ENCODE measurements at regions of chr6 and their contacts with region 1.

Region 1: DNA sequence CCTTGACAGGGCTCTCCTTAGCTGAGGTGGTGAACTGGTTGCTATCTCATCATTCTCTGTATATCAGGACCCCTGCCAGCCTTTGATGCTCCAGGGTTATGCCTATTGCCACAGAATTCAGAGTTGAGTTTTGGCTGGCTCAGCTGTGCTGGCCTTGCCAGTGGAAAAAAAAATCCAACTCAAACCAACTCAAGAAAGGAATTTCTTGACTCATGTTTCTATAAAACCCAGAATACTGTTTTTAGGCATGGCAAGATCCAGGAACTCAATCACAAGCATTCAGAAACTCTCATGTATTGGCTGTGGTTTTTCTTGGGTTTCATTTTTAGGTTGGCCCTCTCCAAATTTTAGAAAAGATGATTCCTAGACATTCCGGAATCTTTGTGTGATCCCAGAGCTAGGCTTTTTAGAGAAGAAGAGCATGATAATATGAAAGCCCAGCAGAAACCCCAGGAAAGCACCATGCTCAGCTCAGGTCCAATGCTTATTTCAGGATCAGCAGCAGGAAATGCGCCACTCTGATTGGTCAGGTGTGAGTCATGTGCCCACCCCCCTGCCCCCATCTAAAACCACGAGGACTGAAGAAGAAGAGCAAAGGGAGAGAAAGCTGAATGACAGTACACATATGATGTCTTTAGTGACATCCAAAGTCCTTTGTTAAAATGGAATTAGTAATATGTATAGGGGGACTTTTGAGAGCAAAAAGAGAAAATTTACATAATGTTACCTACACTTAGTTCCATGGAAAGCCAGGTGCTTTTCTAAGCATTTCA is 122.9 kb downstream of the RNF144B start:
- DNase-seq: peak; percentile 69
- ATAC-seq: peak; percentile 63
- H3K4me3 Mint-ChIP-seq: no peak overlapping the region
- H3K27ac Mint-ChIP-seq: peak overlapping the region; percentile 10
- H3K4me1 Mint-ChIP-seq: peaks cover 43% of the 10 kb centered on the region
- H3K27me3 Mint-ChIP-seq: peaks cover 3% of the 10 kb centered on the region

Region 2: DNA sequence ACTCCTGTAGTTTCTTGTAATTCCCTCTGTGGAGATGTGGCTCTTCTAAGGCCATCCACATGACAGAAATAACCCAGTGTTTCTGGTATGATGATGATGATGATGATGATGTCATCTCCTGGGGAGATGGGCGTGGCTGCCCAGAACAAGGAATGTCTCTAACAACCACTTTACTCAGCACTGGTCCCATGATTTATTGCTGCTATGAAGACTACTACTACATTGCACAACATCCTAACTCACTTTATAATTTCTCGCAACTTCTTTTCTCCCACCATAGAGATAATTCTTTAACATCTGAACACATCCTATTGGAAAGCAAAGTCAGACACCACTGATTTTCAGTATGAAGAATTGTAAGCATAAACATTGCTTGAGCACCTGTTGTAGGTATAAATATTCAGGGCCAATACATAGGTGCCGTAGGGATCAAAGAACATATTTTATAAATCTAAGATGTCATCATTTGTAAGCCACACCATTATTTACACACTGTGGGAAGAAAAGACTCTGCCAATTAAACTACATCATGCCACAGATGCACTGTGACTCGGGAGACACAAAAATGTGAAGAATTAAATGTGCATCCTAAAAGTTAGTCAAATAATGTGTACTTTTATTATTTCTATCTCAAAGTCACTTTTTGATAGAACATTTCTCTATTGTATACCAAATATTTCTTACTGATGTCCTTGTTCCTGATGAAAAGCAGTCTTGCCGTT is 361.6 kb before region 1 on chr6:
- CTCF ChIA-PET with region 1: no interaction called
- POLR2A ChIA-PET with region 1: no interaction called
- intact Hi-C with region 1: loop called in 1 of 2 experiments (anchors 5 kb)
- DNase-seq: peak; percentile 8
- ATAC-seq: no peak
- H3K4me3 Mint-ChIP-seq: no peak overlapping the region
- H3K27ac Mint-ChIP-seq: no peak overlapping the region
- H3K4me1 Mint-ChIP-seq: peaks cover 30% of the 10 kb centered on the region
- H3K27me3 Mint-ChIP-seq: no peaks in the 10 kb centered on the region

Region 3: GRCh38 chr6:18264219-18264922 is 245.7 kb before region 1 on chr6 and contains the start of gene DEK:
- CTCF ChIA-PET with region 1: interaction called, 3 read pairs
- POLR2A ChIA-PET with region 1: no interaction called
- intact Hi-C with region 1: loop called (anchors 2 to 5 kb)
- DNase-seq: peak; percentile 91
- ATAC-seq: peak; percentile 55
- H3K4me3 Mint-ChIP-seq: peak within 1 kb of the TSS; percentile 93
- H3K27ac Mint-ChIP-seq: peak within 1 kb of the TSS; percentile 99
- H3K4me1 Mint-ChIP-seq: peaks cover 48% of the 10 kb centered on the region
- H3K27me3 Mint-ChIP-seq: no peaks in the 10 kb centered on the region
- total RNA-seq, gene DEK: 201 to 273 TPM

Region 4: GRCh38 chr6:18343741-18344140 is 166.3 kb before region 1 on chr6:
- CTCF ChIA-PET with region 1: interaction called, 5 read pairs
- POLR2A ChIA-PET with region 1: interaction called, 4 read pairs
- intact Hi-C with region 1: loop called in 1 of 2 experiments (anchors 5 kb)
- DNase-seq: peak; percentile 46
- ATAC-seq: peak; percentile 90
- H3K4me3 Mint-ChIP-seq: no peak overlapping the region
- H3K27ac Mint-ChIP-seq: no peak overlapping the region
- H3K4me1 Mint-ChIP-seq: peaks cover 13% of the 10 kb centered on the region
- H3K27me3 Mint-ChIP-seq: peaks cover 6% of the 10 kb centered on the region

Region 5: DNA sequence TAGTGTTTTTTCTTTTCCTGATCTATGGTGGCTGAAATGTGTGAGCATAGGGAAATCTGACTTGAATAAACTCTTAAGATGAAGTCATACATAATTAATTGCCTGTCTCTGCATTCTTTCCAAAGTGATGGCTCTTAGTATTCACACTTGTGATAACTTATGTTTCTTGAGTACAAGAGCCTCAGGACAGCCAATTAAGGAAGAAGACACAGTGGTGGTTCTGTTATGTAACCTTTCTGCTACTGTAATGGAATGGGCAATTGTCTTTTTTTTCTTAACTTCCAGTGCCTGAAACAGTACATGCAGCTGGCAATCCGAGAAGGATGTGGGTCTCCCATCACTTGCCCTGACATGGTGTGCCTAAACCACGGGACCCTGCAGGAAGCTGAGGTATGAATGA is 82.8 kb before region 1 on chr6:
- CTCF ChIA-PET with region 1: no interaction called
- POLR2A ChIA-PET with region 1: interaction called, 12 read pairs
- intact Hi-C with region 1: no loop called
- DNase-seq: no peak
- ATAC-seq: no peak
- H3K4me3 Mint-ChIP-seq: no peak overlapping the region
- H3K27ac Mint-ChIP-seq: no peak overlapping the region
- H3K4me1 Mint-ChIP-seq: peaks cover 17% of the 10 kb centered on the region
- H3K27me3 Mint-ChIP-seq: no peaks in the 10 kb centered on the region

Region 6: DNA sequence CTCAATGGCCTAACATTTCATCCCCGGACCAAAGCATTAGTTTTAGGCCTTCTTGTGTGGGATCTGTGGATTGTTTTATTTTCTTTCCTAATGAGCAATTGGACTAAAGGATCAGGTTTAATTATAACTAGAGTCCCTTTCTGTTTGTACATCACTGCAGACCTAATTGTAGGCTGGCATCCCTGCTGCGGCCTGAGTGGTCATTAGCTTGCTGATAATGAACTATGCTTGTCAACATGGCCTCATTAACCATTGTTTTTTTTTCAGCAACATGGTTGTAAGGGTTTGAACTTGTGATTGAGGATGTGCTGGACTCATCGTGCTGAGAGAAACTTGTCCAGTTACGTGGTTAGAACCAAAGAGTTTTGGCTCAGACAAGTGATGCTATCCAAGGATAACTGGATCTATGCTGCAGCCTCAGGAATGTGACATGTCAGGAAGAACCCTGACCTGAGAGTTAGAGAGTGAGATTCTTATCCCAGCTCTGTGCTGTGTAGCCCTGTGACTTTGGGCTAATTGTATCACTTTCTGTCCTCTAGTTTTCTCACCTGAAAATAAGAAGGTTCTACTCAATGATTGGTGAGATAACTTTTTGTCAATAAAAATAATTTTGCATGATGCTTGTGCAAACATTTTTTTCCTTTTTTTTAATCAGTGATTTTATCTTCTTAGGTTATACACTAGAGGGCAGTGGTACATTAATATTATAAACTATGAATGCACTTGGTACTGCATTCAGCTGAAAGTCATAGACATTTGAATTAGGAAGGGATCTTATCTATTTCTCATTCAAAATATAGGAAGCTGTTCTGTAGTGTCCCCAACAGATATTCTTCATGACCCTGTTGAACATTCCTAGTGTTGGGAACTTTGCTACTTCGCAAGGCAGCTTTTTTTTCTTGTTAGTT is 18.0 kb after region 1 on chr6:
- CTCF ChIA-PET with region 1: no interaction called
- POLR2A ChIA-PET with region 1: no interaction called
- intact Hi-C with region 1: no loop called
- DNase-seq: no peak
- ATAC-seq: no peak
- H3K4me3 Mint-ChIP-seq: no peak overlapping the region
- H3K27ac Mint-ChIP-seq: no peak overlapping the region
- H3K4me1 Mint-ChIP-seq: no peaks in the 10 kb centered on the region
- H3K27me3 Mint-ChIP-seq: peaks cover 11% of the 10 kb centered on the region

Measured in activated CD4-positive, alpha-beta T cell treated with anti-CD3 and anti-CD28 coated beads for 36 hours (primary cell).